Esophagus muscularis mucosa (tissue), 4 donors: ENCODE measurements at regions of chr6 and their contacts with region 1.

Region 1: GRCh38 chr6:108835218-108835850 is 12.9 kb upstream of the ARMC2 start:
- DNase-seq: peak; percentile 95
- H3K4me3 ChIP-seq: no peak overlapping the region
- H3K27ac ChIP-seq: peak overlapping the region in 1 of 4 donors; percentile 21
- H3K4me1 ChIP-seq: peaks cover 0 to 13% (median 8%) of the 10 kb centered on the region in 4 donors
- H3K27me3 ChIP-seq: no peaks in the 10 kb centered on the region
- CTCF ChIP-seq: peak in 2 of 3 experiments; percentile 97
- EP300 ChIP-seq: no peak
- POLR2A ChIP-seq: no peak

Region 2: DNA sequence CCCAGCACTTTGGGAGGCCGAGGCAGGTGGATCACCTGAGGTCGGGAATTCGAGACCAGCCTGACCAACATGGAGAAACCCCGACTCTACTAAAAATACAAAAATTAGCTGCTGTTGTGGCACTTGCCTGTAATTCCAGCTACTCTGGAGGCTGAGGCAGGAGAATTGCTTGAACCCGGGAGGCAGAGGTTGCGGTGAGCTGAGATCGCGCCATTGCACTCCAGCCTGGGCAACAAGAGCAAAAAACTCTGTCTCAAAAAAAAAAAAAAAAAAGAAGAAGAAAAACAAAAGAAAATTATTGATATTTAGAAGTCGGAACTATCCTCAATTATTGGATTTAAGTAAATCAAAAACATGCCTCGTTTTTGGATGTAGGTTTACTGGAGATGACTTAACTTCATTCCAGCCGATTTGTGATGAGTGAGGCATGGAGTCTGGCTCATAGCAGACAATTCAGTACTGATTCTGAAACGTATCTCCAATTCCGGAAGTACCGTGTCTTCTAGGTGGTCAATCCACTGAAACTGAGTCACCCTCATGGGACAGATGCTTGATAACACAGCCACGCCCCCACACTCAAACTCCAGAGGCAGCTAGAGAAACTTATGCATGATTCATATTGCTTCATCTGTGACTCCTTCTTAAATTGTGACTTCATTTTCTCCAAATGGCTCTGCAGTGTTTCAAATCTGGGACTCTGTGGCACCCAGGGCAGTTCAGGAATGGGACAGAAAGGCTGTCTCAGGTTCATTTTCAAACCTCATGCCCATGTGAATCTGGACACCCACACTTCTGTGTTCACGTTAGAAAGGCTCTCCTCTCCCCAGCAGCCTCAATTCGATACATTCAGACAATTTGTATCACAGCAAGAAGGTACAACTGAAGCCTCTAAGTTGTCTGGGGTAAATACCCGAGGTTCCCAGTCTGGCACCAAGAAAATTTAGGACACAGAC is 97.5 kb before region 1 on chr6:
- intact Hi-C with region 1: no loop called
- DNase-seq: no peak
- H3K4me3 ChIP-seq: no peak overlapping the region
- H3K27ac ChIP-seq: peak overlapping the region in 1 of 4 donors; percentile 25
- H3K4me1 ChIP-seq: peaks cover 0 to 16% (median 8%) of the 10 kb centered on the region in 4 donors
- H3K27me3 ChIP-seq: no peaks in the 10 kb centered on the region
- CTCF ChIP-seq: no peak
- EP300 ChIP-seq: no peak
- POLR2A ChIP-seq: no peak

Region 3: GRCh38 chr6:108782179-108783041 is 52.9 kb before region 1 on chr6:
- intact Hi-C with region 1: loop called (anchors 5 kb)
- DNase-seq: peak; percentile 96
- H3K4me3 ChIP-seq: peak overlapping the region; percentile 42 to 55 (median 52)
- H3K27ac ChIP-seq: peak overlapping the region; percentile 8 to 70 (median 56)
- H3K4me1 ChIP-seq: peaks cover 6 to 21% (median 19%) of the 10 kb centered on the region in 4 donors
- H3K27me3 ChIP-seq: no peaks in the 10 kb centered on the region
- CTCF ChIP-seq: peak; percentile 69 to 78 (median 77)
- EP300 ChIP-seq: no peak
- POLR2A ChIP-seq: no peak

Region 4: GRCh38 chr6:108896111-108896661 is 60.9 kb after region 1 on chr6:
- intact Hi-C with region 1: loop called (anchors 5 kb)
- DNase-seq: no peak
- H3K4me3 ChIP-seq: no peak overlapping the region
- H3K27ac ChIP-seq: peak overlapping the region; percentile 37 to 58 (median 52)
- H3K4me1 ChIP-seq: peaks cover 17 to 24% (median 21%) of the 10 kb centered on the region in 4 donors
- H3K27me3 ChIP-seq: no peaks in the 10 kb centered on the region
- CTCF ChIP-seq: no peak
- EP300 ChIP-seq: no peak
- POLR2A ChIP-seq: no peak